ENCODE measurements at regions of chr15 and their contacts with region 1.

Region 1: GRCh38 chr15:82197733-82198594 is 64.6 kb downstream of the EFL1 start:
- DNase-seq: peak; percentile 22 to 73
- ATAC-seq: peak; percentile 68 to 81 (median 68)
- H3K4me3 ChIP-seq: no peak overlapping the region
- H3K4me3 Mint-ChIP-seq: no peak overlapping the region
- H3K27ac ChIP-seq: no peak overlapping the region
- H3K27ac Mint-ChIP-seq: no peak overlapping the region
- H3K4me1 ChIP-seq: no peaks in the 10 kb centered on the region
- H3K4me1 Mint-ChIP-seq: peaks cover 0 to 7% of the 10 kb centered on the region in 2 donors
- H3K27me3 ChIP-seq: no peaks in the 10 kb centered on the region
- H3K27me3 Mint-ChIP-seq: no peaks in the 10 kb centered on the region
- CTCF ChIP-seq: peak; percentile 62

Region 2: DNA sequence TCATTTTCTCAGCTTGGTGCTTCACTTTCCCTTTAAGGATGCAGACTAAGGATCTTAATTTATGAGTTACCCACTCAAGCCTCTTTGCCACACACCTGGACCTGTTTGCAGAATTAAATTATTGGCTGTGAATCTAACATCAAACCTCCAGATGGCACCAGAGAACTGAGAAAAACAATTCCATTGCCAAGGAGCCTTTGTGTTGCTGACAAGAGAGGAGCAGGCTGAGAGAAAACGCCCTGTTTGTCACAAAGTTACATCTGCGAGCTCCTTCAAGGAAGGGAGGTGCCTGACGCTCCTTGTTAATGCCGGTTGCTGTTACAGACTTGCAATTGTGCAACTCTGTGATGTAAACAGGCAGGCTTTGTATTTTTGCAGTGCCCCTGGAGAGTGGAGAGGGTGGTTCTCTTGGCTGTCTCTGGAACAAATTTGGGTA is 787.6 kb before region 1 on chr15:
- intact Hi-C with region 1: loop called (anchors 5 kb)
- DNase-seq: peak in 1 of 2 donors; percentile 75
- ATAC-seq: peak in 2 of 3 donors; percentile 22 to 50
- H3K4me3 ChIP-seq: no peak overlapping the region
- H3K4me3 Mint-ChIP-seq: no peak overlapping the region
- H3K27ac ChIP-seq: no peak overlapping the region
- H3K27ac Mint-ChIP-seq: no peak overlapping the region
- H3K4me1 ChIP-seq: peaks cover 6% of the 10 kb centered on the region
- H3K4me1 Mint-ChIP-seq: peaks cover 17 to 18% of the 10 kb centered on the region in 2 donors
- H3K27me3 ChIP-seq: no peaks in the 10 kb centered on the region
- H3K27me3 Mint-ChIP-seq: peaks cover 22 to 30% of the 10 kb centered on the region in 2 donors
- CTCF ChIP-seq: peak; percentile 23

Region 3: GRCh38 chr15:81480645-81481053 is 717.3 kb before region 1 on chr15:
- intact Hi-C with region 1: loop called (anchors 2 kb)
- DNase-seq: peak in 1 of 2 donors; percentile 71
- ATAC-seq: peak; percentile 31 to 75 (median 66)
- H3K4me3 ChIP-seq: no peak overlapping the region
- H3K4me3 Mint-ChIP-seq: no peak overlapping the region
- H3K27ac ChIP-seq: no peak overlapping the region
- H3K27ac Mint-ChIP-seq: no peak overlapping the region
- H3K4me1 ChIP-seq: no peaks in the 10 kb centered on the region
- H3K4me1 Mint-ChIP-seq: no peaks in the 10 kb centered on the region
- H3K27me3 ChIP-seq: no peaks in the 10 kb centered on the region
- H3K27me3 Mint-ChIP-seq: no peaks in the 10 kb centered on the region
- CTCF ChIP-seq: peak; percentile 95

Region 4: GRCh38 chr15:82108489-82109078 is 89.4 kb before region 1 on chr15:
- intact Hi-C with region 1: loop called (anchors 10 kb)
- DNase-seq: peak; percentile 48 to 67
- ATAC-seq: peak; percentile 81 to 98 (median 92)
- H3K4me3 ChIP-seq: no peak overlapping the region
- H3K4me3 Mint-ChIP-seq: no peak overlapping the region
- H3K27ac ChIP-seq: no peak overlapping the region
- H3K27ac Mint-ChIP-seq: no peak overlapping the region
- H3K4me1 ChIP-seq: no peaks in the 10 kb centered on the region
- H3K4me1 Mint-ChIP-seq: peaks cover 0 to 6% of the 10 kb centered on the region in 2 donors
- H3K27me3 ChIP-seq: no peaks in the 10 kb centered on the region
- H3K27me3 Mint-ChIP-seq: no peaks in the 10 kb centered on the region
- CTCF ChIP-seq: peak; percentile 68

Region 5: DNA sequence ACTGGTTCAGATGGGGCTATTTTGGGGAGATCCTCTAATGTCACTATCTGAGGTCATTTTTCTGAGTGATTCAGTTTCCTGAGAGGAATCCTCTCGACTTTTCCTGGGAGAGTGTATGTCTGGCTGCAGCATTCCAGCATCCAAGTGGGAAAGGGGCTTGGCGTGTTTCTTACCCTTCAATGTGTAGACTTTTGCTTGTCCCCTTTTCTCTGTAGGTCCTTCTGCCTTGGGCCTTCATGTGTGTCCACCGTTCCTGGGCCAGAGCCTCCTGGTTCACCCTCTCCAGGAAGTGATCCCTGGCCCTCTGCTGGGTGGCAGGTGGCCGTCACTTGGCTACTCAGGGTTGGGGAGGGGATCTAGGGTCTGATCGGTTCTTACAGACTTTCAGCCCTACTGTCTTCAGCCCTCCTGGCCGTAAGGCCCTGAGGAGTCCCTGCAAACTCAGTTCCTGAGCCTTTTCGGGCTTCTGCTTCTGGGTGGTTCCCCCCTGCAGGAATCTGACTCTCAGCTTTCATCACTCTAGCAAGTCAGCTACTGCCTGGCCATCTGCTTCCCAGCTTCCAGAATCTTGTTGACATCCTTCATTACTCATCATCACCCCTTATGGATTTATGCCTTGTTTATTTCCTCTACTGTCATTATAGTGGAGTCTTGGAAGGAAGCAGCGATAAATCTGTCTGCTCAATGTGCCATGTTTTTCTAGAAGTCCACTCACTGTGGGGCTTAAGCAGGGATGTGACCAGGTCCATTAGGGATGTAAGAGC is 114.8 kb after region 1 on chr15:
- intact Hi-C with region 1: no loop called
- DNase-seq: no peak
- ATAC-seq: no peak
- H3K4me3 ChIP-seq: no peak overlapping the region
- H3K4me3 Mint-ChIP-seq: no peak overlapping the region
- H3K27ac ChIP-seq: no peak overlapping the region
- H3K27ac Mint-ChIP-seq: no peak overlapping the region
- H3K4me1 ChIP-seq: no peaks in the 10 kb centered on the region
- H3K4me1 Mint-ChIP-seq: no peaks in the 10 kb centered on the region
- H3K27me3 ChIP-seq: no peaks in the 10 kb centered on the region
- H3K27me3 Mint-ChIP-seq: peaks cover 0 to 15% of the 10 kb centered on the region in 2 donors
- CTCF ChIP-seq: no peak

Region 6: GRCh38 chr15:83108266-83109226 is 910.6 kb after region 1 on chr15:
- intact Hi-C with region 1: no loop called
- DNase-seq: peak; percentile 32 to 35
- ATAC-seq: peak; percentile 82 to 90 (median 87)
- H3K4me3 ChIP-seq: peak overlapping the region; percentile 47
- H3K4me3 Mint-ChIP-seq: peak overlapping the region; percentile 97
- H3K27ac ChIP-seq: peak overlapping the region; percentile 68
- H3K27ac Mint-ChIP-seq: peak overlapping the region; percentile 69 to 96
- H3K4me1 ChIP-seq: peaks cover 25% of the 10 kb centered on the region
- H3K4me1 Mint-ChIP-seq: peaks cover 26 to 41% of the 10 kb centered on the region in 2 donors
- H3K27me3 ChIP-seq: no peaks in the 10 kb centered on the region
- H3K27me3 Mint-ChIP-seq: peaks cover 0 to 8% of the 10 kb centered on the region in 2 donors
- CTCF ChIP-seq: no peak